IMR-90 (cell line): ENCODE measurements at regions of chrX and their contacts with region 1.

Region 1: DNA sequence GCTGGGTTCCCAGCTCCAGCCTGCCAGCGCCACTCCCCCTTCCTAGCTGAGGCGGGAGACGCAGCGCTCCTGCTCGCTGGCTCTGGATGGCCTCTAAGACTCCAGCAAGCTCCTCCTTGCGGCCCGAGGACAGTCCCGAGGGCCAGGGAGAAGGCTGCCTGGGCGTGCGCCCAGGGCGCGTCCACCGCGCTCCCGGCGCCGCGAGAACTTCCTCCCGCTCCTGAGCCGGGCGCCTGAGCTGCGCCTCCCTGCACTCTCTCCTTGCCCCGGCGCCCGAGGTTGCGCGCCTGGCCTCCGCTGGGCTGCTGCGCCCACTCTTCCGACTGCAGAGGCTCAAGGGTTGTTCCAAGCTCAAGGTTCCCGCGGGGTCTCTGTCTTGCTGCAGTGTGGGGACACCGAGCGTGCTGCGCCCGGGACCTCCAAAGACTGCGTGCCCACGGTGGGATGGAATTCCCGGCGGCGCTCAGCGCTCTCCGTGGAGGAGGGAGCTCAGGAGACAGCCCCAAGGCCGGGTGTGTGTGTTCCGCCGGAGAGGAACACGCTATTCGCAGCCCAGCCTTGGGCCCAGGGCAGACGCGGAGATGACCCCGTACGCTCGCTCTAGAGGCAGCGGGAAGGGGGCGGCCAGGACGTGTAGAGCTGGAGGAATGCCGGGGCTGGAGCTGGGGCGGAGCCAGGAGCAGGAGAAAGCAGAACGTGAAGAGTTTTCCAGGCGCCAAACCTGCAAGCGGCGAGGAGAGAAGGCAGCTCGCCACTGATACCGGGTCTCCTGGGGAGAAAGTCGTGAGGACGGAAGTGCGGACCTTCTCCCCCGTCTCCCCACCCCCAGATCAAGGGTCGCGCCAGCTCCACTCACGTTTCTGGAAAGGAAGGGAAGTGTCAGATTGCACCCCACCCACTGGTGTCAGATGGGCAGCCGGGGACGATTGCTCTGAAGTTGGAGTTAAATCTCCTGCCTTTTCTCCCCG is at the start of gene ARHGAP6:
- DNase-seq: peak; percentile 20
- ATAC-seq: peak; percentile 78
- H3K4me3 ChIP-seq: peak within 1 kb of the TSS; percentile 31
- H3K27ac ChIP-seq: no peak within 1 kb of the TSS
- H3K4me1 ChIP-seq: no peaks in the 10 kb centered on the region
- H3K27me3 ChIP-seq: peaks cover 16% of the 10 kb centered on the region
- CTCF ChIP-seq: no peak
- POLR2A ChIP-seq: no peak
- RAD21 ChIP-seq: no peak
- total RNA-seq, gene ARHGAP6: 1.1 and 1.8 TPM in 2 replicates

Region 2: GRCh38 chrX:11678158-11678557 is 12.7 kb after region 1 on chrX:
- CTCF ChIA-PET with region 1: no interaction called
- POLR2A ChIA-PET with region 1: interaction called, 23 read pairs
- dilution Hi-C with region 1: no loop called
- in situ Hi-C with region 1: no loop called
- intact Hi-C with region 1: no loop called
- DNase-seq: no peak
- ATAC-seq: no peak
- H3K4me3 ChIP-seq: no peak overlapping the region
- H3K27ac ChIP-seq: no peak overlapping the region
- H3K4me1 ChIP-seq: no peaks in the 10 kb centered on the region
- H3K27me3 ChIP-seq: no peaks in the 10 kb centered on the region
- CTCF ChIP-seq: 0 out of 2 replicates have a peak, but pooled peaks have one; percentile 11
- POLR2A ChIP-seq: no peak
- RAD21 ChIP-seq: no peak

Region 3: DNA sequence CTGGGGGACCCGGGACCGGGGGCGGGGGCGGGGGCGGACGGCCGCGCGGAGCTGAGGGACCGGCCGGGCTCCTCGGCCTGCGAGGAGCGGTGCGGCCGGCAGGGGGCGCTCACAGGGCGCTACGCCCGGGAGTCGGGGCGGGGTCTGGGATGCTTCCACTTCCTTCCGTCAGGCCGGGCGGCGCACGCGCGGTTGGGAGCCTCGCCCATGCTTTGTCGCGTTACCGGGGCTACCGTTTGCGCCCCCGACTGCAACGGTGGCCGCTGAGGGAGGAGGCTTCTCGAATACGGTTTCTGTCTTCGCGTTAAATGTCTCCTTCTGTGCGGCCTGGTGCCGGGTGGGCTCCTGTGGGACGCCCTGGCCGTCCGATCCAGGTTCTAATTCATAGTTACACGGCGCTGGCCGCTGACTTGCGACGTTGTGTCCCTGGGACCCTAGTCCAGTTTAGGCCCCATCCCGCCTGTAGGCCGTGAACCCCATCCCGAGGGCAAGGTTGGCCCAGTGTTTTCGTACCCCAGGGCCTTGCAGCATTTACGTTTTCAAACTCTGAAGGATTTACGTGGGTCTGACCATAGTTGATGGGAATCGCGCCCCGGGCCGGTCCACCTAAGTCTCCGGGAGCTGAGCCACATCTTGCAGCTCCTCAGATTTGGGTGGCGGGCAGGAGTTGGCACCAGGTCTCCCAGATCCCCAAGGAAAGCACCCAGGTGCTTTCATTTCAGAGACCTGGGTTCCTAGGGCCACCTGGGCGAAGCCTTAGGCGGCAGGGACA is 93.2 kb after region 1 on chrX:
- CTCF ChIA-PET with region 1: no interaction called
- POLR2A ChIA-PET with region 1: no interaction called
- dilution Hi-C with region 1: no loop called
- in situ Hi-C with region 1: no loop called
- intact Hi-C with region 1: loop called (anchors 5 kb)
- DNase-seq: peak; percentile 73
- ATAC-seq: peak; percentile 79
- H3K4me3 ChIP-seq: peak overlapping the region; percentile 97
- H3K27ac ChIP-seq: peak overlapping the region; percentile 98
- H3K4me1 ChIP-seq: no peaks in the 10 kb centered on the region
- H3K27me3 ChIP-seq: no peaks in the 10 kb centered on the region
- CTCF ChIP-seq: peak; percentile 62
- POLR2A ChIP-seq: no peak
- RAD21 ChIP-seq: no peak